Sigmoid colon (tissue), 7 donors: ENCODE measurements at regions of chr2 and their contacts with region 1.

Region 1: GRCh38 chr2:96305091-96305978 is at the start of gene SNRNP200:
- DNase-seq: peak; percentile 93
- H3K4me3 ChIP-seq: peak within 1 kb of the TSS; percentile 79 to 98 (median 87)
- H3K27ac ChIP-seq: peak within 1 kb of the TSS; percentile 84 to 88 (median 85)
- H3K4me1 ChIP-seq: peaks cover 0 to 39% (median 15%) of the 10 kb centered on the region in 4 donors
- H3K27me3 ChIP-seq: no peaks in the 10 kb centered on the region
- CTCF ChIP-seq: no peak
- EP300 ChIP-seq: no peak
- POLR2A ChIP-seq: peak; percentile 77 to 84
- total RNA-seq, gene SNRNP200: 69.4 to 86.1 (median 79.2) TPM

Region 2: DNA sequence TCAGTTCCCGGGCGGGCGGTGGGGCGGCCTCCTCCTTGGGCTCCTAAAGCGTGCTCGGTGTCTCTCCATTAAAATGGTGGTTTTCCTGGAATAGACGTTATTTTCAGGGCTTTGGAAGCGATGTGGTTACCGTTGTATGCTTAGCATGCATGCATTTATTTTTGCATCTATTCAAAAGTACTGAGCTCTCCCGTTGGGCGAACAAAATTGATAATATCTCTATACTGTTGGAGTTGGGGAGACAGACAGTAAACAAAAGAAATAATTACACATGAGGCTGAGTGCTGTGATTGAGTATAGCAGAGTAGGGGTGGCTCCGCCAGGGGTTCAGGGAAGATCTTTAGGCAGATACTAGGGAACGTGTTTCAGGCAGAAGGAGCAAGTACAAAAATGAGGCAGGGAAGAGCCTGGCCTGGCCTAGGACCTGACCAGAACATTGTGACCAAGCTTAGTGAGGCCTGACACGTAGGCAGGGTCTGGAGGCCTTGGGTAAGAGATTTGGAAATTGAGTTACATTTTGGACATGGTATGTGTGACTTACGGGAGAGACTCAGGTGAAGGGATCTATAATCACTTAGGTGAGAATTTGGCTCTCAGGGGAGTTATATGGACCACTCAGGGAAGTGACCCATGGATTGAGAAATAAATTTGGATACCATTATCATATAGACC is 30.9 kb after region 1 on chr2:
- intact Hi-C with region 1: loop called (anchors 2 kb)
- DNase-seq: no peak
- H3K4me3 ChIP-seq: peak overlapping the region; percentile 52 to 69 (median 62)
- H3K27ac ChIP-seq: peak overlapping the region; percentile 86 to 91 (median 88)
- H3K4me1 ChIP-seq: peaks cover 0 to 18% (median 8%) of the 10 kb centered on the region in 4 donors
- H3K27me3 ChIP-seq: no peaks in the 10 kb centered on the region
- CTCF ChIP-seq: no peak
- EP300 ChIP-seq: no peak
- POLR2A ChIP-seq: peak in 1 of 2 donors; percentile 19

Region 3: GRCh38 chr2:96470636-96471035 is 165.3 kb after region 1 on chr2:
- intact Hi-C with region 1: no loop called
- DNase-seq: no peak
- H3K4me3 ChIP-seq: peak overlapping the region in 3 of 4 donors; percentile 13 to 27 (median 27)
- H3K27ac ChIP-seq: no peak overlapping the region
- H3K4me1 ChIP-seq: peaks cover 0 to 6% (median 5%) of the 10 kb centered on the region in 4 donors
- H3K27me3 ChIP-seq: peaks cover 0 to 8% (median 0%) of the 10 kb centered on the region in 3 donors
- CTCF ChIP-seq: peak in 3 of 4 experiments; percentile 15 to 43 (median 33)
- EP300 ChIP-seq: no peak
- POLR2A ChIP-seq: no peak